ENCODE measurements at regions of chr1 and their contacts with region 1.

Region 1: DNA sequence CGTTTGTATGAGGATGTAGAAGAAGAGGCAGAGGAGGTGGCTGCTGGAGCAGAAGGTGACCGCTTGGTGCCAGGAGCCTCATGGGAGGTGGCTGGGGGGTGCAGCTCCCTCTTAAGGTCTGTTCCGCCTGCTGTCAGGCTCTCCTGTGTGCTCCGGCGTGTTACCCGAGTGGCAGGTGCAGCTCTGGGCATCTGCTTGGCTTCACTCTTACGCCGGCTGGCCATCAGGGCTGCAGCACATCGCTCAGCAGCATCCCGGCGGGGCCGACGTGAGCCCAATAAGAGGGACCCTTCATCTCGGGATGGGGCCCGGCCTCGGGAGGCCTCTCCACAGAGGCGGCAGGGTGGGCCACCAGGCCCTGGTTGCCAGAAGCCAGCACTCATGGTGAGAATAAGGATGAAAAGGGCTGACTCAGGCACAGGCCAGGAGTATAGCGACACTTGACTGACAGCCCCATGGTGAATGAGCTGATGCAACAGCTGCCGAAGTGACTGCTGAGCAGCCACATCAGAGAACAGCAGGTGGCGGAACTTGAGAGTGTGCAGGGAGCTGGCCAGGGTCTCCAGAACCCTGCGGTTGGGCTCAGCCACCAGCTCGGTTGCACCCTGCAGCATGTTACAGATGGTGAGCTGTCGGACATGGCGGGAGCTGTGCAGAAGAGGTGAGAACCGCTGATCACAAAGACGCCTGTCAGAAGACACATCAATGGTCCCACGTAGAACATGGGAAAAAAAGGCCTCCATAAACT is 17.5 kb downstream of the LRRC41 start:
- DNase-seq: peak; percentile 83
- ATAC-seq: peak; percentile 93
- H3K4me3 Mint-ChIP-seq: no peak overlapping the region
- H3K27ac Mint-ChIP-seq: peak overlapping the region; percentile 83
- H3K4me1 Mint-ChIP-seq: peaks cover 21% of the 10 kb centered on the region
- H3K27me3 Mint-ChIP-seq: no peaks in the 10 kb centered on the region

Region 2: GRCh38 chr1:46303038-46303871 is 17.4 kb after region 1 on chr1 and contains the starts of genes LRRC41 and UQCRH:
- CTCF ChIA-PET with region 1: interaction called, 3 read pairs
- POLR2A ChIA-PET with region 1: interaction called, 7 read pairs
- intact Hi-C with region 1: loop called in 1 of 2 experiments (anchors 1 kb)
- DNase-seq: peak; percentile 96
- ATAC-seq: peak; percentile 88
- H3K4me3 Mint-ChIP-seq: peak within 1 kb of the TSS; percentile 95
- H3K27ac Mint-ChIP-seq: peak within 1 kb of the TSS; percentile 95
- H3K4me1 Mint-ChIP-seq: peaks cover 44% of the 10 kb centered on the region
- H3K27me3 Mint-ChIP-seq: no peaks in the 10 kb centered on the region
- total RNA-seq, gene LRRC41: 33.4 to 34.7 TPM
- total RNA-seq, gene UQCRH: 258 to 391 TPM